Aorta (tissue), 5 donors: ENCODE measurements at regions of chr12 and their contacts with region 1.

Region 1: DNA sequence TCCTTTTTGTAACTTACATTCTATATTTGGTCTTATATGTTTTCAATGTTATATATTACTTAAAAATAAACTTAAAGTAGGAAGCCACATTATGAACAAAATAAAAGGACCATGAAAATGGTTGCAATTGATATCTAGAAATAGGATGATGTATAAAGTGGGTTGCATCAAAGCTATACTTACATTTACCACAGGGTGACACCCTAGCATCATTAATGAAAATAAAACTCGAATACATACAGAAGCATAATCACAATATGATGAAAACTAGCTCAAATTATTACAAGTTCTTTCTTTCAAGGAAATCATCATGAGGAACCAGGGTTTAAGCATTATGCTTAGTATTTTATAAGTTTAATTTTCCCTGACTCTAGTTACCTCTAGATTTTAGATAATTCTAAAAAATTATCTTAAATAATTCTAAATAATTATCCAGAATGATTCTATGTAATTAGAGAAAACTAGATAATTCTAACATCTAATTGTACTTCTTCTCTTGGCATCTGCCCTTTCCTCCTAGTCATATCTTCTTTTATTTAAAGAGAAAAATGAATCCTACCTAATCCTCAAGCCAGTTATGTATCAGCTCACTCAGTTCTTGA is 31.2 kb downstream of the TAS2R7 start:
- DNase-seq: no peak
- ATAC-seq: no peak
- H3K4me3 ChIP-seq: no peak overlapping the region
- H3K27ac ChIP-seq: no peak overlapping the region
- H3K4me1 ChIP-seq: no peaks in the 10 kb centered on the region
- H3K27me3 ChIP-seq: no peaks in the 10 kb centered on the region

Region 2: DNA sequence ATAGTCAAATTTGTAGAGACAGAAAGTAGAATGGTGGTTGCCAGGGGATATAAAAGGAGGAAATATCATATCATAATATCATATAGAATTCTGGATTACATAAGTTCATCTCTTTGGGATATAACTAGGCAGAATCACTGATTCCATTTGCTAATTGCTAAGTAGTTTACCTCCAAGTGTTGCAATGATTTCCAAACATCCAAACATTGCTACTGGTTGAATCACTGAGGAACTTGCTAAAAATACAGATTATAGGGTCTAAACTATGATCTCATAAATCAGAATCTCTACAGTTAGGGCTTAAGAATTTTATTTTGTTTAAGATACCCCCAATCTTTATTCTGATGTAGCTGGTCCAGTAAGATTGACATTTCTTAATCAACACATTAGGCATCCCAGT is 431.6 kb after region 1 on chr12:
- intact Hi-C with region 1: loop called (anchors 2 to 5 kb)
- DNase-seq: no peak
- ATAC-seq: no peak
- H3K4me3 ChIP-seq: no peak overlapping the region
- H3K27ac ChIP-seq: no peak overlapping the region
- H3K4me1 ChIP-seq: no peaks in the 10 kb centered on the region
- H3K27me3 ChIP-seq: no peaks in the 10 kb centered on the region